CD4-positive, alpha-beta memory T cell (primary cell): ENCODE measurements at regions of chr5 and their contacts with region 1.

Region 1: DNA sequence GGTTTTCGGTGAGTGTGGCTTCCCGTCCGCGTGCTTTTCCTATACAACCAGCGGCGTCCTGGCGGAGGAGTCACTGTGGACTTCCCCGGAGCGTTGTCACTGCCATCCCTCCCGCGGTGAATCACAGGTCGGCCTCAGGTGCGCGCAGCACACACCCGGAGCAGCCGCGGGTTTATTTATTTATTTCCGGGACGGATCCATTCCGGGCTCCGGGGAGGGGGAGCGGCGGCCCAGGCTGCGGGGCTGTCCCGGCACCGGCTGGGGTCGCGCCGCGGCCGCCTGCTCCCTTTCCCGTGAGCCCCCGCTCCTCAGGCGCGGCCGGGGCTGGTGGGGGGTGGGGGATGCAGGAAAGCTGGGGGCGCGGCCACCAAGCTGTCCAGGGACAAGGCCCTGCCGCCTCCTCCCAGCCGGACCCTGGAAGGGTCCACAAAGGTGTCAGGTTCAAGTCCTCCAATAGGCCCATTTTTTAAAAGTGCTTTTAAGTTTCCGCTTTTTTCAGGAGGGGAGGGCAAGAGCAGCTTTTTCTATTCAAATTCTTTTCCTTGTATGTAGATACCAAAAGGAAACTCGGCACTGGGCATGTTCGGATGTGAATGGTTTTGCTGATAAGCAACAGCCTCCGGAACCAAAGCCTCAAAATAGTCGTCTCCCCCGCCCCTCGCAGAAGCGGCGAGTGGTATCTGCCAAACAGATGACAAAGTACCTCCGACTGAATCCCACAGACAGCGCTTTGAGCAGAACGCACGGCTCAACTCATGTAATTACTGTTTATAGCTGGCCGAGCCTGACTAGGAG is 192.5 kb downstream of the CD180 start:
- DNase-seq: peak; percentile 88 to 96 (median 90)
- H3K4me3 ChIP-seq: peak overlapping the region; percentile 81 to 83
- H3K4me3 Mint-ChIP-seq: peak overlapping the region; percentile 89 to 99 (median 98)
- H3K27ac ChIP-seq: peak overlapping the region; percentile 82
- H3K27ac Mint-ChIP-seq: peak overlapping the region; percentile 95 to 99 (median 98)
- H3K4me1 ChIP-seq: peaks cover 55% of the 10 kb centered on the region
- H3K4me1 Mint-ChIP-seq: peaks cover 40 to 58% (median 50%) of the 10 kb centered on the region in 4 donors
- H3K27me3 ChIP-seq: no peaks in the 10 kb centered on the region
- H3K27me3 Mint-ChIP-seq: no peaks in the 10 kb centered on the region

Region 2: GRCh38 chr5:65722575-65723403 is 1281.3 kb before region 1 on chr5:
- CTCF ChIA-PET with region 1: no interaction called
- POLR2A ChIA-PET with region 1: no interaction called
- intact Hi-C with region 1: no loop called
- DNase-seq: peak in 3 of 5 donors; percentile 6 to 11 (median 11)
- H3K4me3 ChIP-seq: peak overlapping the region; percentile 57 to 64
- H3K4me3 Mint-ChIP-seq: peak overlapping the region; percentile 88 to 98 (median 92)
- H3K27ac ChIP-seq: peak overlapping the region; percentile 91
- H3K27ac Mint-ChIP-seq: peak overlapping the region in 6 of 7 donors; percentile 75 to 93 (median 88)
- H3K4me1 ChIP-seq: peaks cover 38% of the 10 kb centered on the region
- H3K4me1 Mint-ChIP-seq: peaks cover 9 to 22% (median 14%) of the 10 kb centered on the region in 4 donors
- H3K27me3 ChIP-seq: no peaks in the 10 kb centered on the region
- H3K27me3 Mint-ChIP-seq: no peaks in the 10 kb centered on the region

Region 3: GRCh38 chr5:67015541-67016191 is 11.5 kb after region 1 on chr5:
- CTCF ChIA-PET with region 1: no interaction called
- POLR2A ChIA-PET with region 1: interaction called, 24 read pairs
- intact Hi-C with region 1: no loop called
- DNase-seq: no peak
- H3K4me3 ChIP-seq: no peak overlapping the region
- H3K4me3 Mint-ChIP-seq: peak overlapping the region in 3 of 8 donors; percentile 4 to 37 (median 36)
- H3K27ac ChIP-seq: no peak overlapping the region
- H3K27ac Mint-ChIP-seq: peak overlapping the region in 1 of 7 donors; percentile 0
- H3K4me1 ChIP-seq: peaks cover 17% of the 10 kb centered on the region
- H3K4me1 Mint-ChIP-seq: peaks cover 30 to 52% (median 38%) of the 10 kb centered on the region in 4 donors
- H3K27me3 ChIP-seq: no peaks in the 10 kb centered on the region
- H3K27me3 Mint-ChIP-seq: no peaks in the 10 kb centered on the region

Region 4: DNA sequence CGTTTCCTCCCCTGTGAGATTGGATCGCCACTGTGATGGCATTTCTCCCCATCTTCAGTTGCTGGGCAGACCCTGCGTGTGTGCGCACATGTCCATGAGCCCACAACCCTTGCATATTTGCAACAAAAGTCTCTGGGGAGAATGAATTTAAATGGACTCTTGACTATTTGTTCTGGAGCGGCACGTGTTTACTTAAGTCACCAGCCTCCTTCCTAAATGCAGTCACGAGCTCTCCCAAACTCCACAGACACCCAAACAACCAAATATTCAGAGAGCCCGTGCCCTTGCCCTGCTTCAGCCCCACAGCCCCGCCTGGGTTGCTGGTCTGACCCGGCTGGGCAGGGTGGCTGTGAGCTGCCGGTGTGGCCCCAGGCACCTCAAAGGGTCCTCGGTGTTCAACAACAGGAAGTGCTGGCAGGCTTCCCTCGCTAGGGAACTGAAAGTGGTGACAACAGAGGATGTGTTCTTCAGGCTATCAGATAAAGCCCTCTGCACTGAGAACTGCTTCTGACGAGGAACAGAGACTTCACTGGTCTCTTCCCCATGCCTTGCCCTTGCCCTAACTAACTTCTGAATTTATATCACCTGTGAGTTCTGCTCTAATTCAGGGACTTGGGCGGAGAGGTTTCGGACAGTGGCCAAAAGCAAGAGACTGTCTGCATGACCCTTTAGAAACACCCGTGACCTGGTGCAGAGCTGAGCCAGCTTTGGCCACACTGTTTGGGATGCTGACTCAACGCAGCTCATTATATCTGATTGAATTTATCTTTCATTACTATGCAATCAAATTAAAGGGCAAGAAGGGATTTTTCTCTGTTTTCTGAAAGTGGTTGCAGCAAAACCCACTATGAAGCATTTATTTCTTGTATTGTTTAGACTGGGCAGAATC is 211.7 kb after region 1 on chr5:
- CTCF ChIA-PET with region 1: no interaction called
- POLR2A ChIA-PET with region 1: interaction called, 10 read pairs
- intact Hi-C with region 1: no loop called
- DNase-seq: peak; percentile 72 to 82 (median 80)
- H3K4me3 ChIP-seq: peak overlapping the region; percentile 10 to 44
- H3K4me3 Mint-ChIP-seq: peak overlapping the region; percentile 52 to 91 (median 82)
- H3K27ac ChIP-seq: peak overlapping the region; percentile 52
- H3K27ac Mint-ChIP-seq: peak overlapping the region; percentile 94 to 99 (median 98)
- H3K4me1 ChIP-seq: peaks cover 65% of the 10 kb centered on the region
- H3K4me1 Mint-ChIP-seq: peaks cover 57 to 69% (median 60%) of the 10 kb centered on the region in 4 donors
- H3K27me3 ChIP-seq: no peaks in the 10 kb centered on the region
- H3K27me3 Mint-ChIP-seq: no peaks in the 10 kb centered on the region